CD4-positive, alpha-beta T cell (primary cell): ENCODE measurements at regions of chr14 and their contacts with region 1.

Region 1: GRCh38 chr14:106518054-106518943 is 991.9 kb downstream of the TMEM121 start:
- DNase-seq: peak; percentile 79 to 92 (median 87)
- ATAC-seq: peak; percentile 93
- H3K4me3 ChIP-seq: no peak overlapping the region
- H3K4me3 Mint-ChIP-seq: no peak overlapping the region
- H3K27ac ChIP-seq: no peak overlapping the region
- H3K27ac Mint-ChIP-seq: no peak overlapping the region
- H3K4me1 ChIP-seq: peaks cover 12% of the 10 kb centered on the region
- H3K4me1 Mint-ChIP-seq: peaks cover 34% of the 10 kb centered on the region
- H3K27me3 ChIP-seq: peaks cover 0 to 10% of the 10 kb centered on the region in 2 experiments
- H3K27me3 Mint-ChIP-seq: no peaks in the 10 kb centered on the region
- CTCF ChIP-seq: peak; percentile 77

Region 2: DNA sequence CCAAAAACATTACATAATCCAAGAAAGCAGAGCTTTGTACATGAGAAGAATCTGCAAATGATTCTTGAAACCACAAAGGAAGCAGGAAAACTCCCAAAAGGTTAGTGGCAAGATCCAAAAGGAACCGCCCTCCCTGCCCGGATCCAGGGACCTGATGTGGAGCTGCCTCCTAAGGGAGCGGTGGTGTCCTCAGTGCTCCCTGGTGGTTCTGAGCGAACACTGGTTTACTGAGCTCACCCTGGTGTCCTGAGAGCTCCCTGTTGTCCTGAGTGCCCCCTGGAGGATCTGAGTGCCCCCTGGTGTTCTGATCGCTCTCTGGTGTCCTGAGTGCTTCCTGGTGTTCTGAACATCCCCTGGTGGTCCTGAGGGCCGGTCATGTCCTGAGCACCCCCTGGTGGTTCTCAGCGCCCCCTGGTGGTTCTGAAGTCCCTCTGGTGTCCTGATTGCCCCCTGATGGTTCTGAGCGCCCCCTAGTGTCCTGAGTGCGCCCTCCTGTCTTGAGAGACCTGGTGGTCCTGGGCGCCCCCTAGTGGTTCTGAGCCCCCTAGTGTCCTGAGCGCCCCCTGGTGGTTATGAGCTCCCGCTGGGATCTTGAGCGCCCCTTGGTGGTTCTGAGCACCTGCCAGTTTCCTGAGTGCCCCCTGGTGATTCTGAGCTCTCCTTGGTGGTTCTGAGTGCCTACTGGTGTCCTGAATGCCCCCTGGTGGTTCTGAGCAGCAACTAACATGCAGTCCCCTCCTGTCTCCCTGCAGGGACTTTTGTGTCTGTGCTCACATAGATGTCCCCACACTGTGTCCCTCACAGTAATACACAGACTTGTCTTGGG is 100.9 kb before region 1 on chr14:
- CTCF ChIA-PET with region 1: interaction called, 12 read pairs
- POLR2A ChIA-PET with region 1: no interaction called
- intact Hi-C with region 1: no loop called
- DNase-seq: peak; percentile 38 to 90 (median 74)
- ATAC-seq: peak; percentile 61
- H3K4me3 ChIP-seq: no peak overlapping the region
- H3K4me3 Mint-ChIP-seq: no peak overlapping the region
- H3K27ac ChIP-seq: no peak overlapping the region
- H3K27ac Mint-ChIP-seq: peak overlapping the region; percentile 56
- H3K4me1 ChIP-seq: peaks cover 7% of the 10 kb centered on the region
- H3K4me1 Mint-ChIP-seq: peaks cover 15% of the 10 kb centered on the region
- H3K27me3 ChIP-seq: no peaks in the 10 kb centered on the region
- H3K27me3 Mint-ChIP-seq: peaks cover 10% of the 10 kb centered on the region
- CTCF ChIP-seq: peak; percentile 77

Region 3: GRCh38 chr14:106436310-106436905 is 81.9 kb before region 1 on chr14:
- CTCF ChIA-PET with region 1: interaction called, 4 read pairs
- POLR2A ChIA-PET with region 1: no interaction called
- intact Hi-C with region 1: loop called (anchors 1 to 2 kb)
- DNase-seq: peak; percentile 48 to 77 (median 67)
- ATAC-seq: no peak
- H3K4me3 ChIP-seq: no peak overlapping the region
- H3K4me3 Mint-ChIP-seq: no peak overlapping the region
- H3K27ac ChIP-seq: no peak overlapping the region
- H3K27ac Mint-ChIP-seq: no peak overlapping the region
- H3K4me1 ChIP-seq: no peaks in the 10 kb centered on the region
- H3K4me1 Mint-ChIP-seq: peaks cover 5% of the 10 kb centered on the region
- H3K27me3 ChIP-seq: no peaks in the 10 kb centered on the region
- H3K27me3 Mint-ChIP-seq: peaks cover 24% of the 10 kb centered on the region
- CTCF ChIP-seq: peak; percentile 74

Region 4: GRCh38 chr14:106442857-106443256 is 75.4 kb before region 1 on chr14:
- CTCF ChIA-PET with region 1: no interaction called
- POLR2A ChIA-PET with region 1: no interaction called
- intact Hi-C with region 1: loop called in 1 of 2 experiments (anchors 1 kb)
- DNase-seq: peak; percentile 15 to 60 (median 40)
- ATAC-seq: peak; percentile 93
- H3K4me3 ChIP-seq: no peak overlapping the region
- H3K4me3 Mint-ChIP-seq: no peak overlapping the region
- H3K27ac ChIP-seq: no peak overlapping the region
- H3K27ac Mint-ChIP-seq: no peak overlapping the region
- H3K4me1 ChIP-seq: peaks cover 5% of the 10 kb centered on the region
- H3K4me1 Mint-ChIP-seq: peaks cover 5% of the 10 kb centered on the region
- H3K27me3 ChIP-seq: peaks cover 0 to 2% of the 10 kb centered on the region in 2 experiments
- H3K27me3 Mint-ChIP-seq: peaks cover 36% of the 10 kb centered on the region
- CTCF ChIP-seq: peak; percentile 62

Region 5: GRCh38 chr14:106459971-106460730 is 58.1 kb before region 1 on chr14:
- CTCF ChIA-PET with region 1: interaction called, 3 read pairs
- POLR2A ChIA-PET with region 1: interaction called, 3 read pairs
- intact Hi-C with region 1: loop called (anchors 1 kb)
- DNase-seq: peak; percentile 52 to 85 (median 61)
- ATAC-seq: peak; percentile 74
- H3K4me3 ChIP-seq: no peak overlapping the region
- H3K4me3 Mint-ChIP-seq: no peak overlapping the region
- H3K27ac ChIP-seq: no peak overlapping the region
- H3K27ac Mint-ChIP-seq: no peak overlapping the region
- H3K4me1 ChIP-seq: peaks cover 7% of the 10 kb centered on the region
- H3K4me1 Mint-ChIP-seq: peaks cover 5% of the 10 kb centered on the region
- H3K27me3 ChIP-seq: no peaks in the 10 kb centered on the region
- H3K27me3 Mint-ChIP-seq: peaks cover 4% of the 10 kb centered on the region
- CTCF ChIP-seq: peak; percentile 87

Region 6: DNA sequence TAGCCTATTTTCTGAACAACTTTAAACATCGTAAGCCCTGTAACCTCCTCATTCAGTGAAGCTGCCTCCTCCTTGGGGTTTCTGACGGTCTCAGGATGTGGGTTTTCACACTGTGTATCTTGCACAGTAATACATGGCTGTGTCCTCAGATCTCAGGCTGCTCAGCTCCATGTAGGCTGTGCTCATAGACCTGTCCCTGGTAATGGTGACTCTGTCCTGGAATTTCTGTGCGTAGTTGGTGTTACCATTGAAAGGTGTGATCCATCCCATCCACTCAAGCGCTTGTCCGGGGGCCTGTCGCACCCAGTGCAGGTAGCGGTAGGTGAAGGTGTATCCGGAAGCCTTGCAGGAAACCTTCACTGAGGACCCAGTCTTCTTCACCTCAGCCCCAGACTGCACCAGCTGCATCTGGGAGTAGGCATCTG is 11.4 kb before region 1 on chr14:
- CTCF ChIA-PET with region 1: interaction called, 18 read pairs
- POLR2A ChIA-PET with region 1: interaction called, 3 read pairs
- intact Hi-C with region 1: loop called in 1 of 2 experiments (anchors 1 kb)
- DNase-seq: peak; percentile 28 to 86 (median 45)
- ATAC-seq: peak; percentile 65
- H3K4me3 ChIP-seq: peak overlapping the region; percentile 36
- H3K4me3 Mint-ChIP-seq: peak overlapping the region; percentile 85
- H3K27ac ChIP-seq: peak overlapping the region; percentile 64 to 82
- H3K27ac Mint-ChIP-seq: peak overlapping the region; percentile 98
- H3K4me1 ChIP-seq: peaks cover 69% of the 10 kb centered on the region
- H3K4me1 Mint-ChIP-seq: peaks cover 71% of the 10 kb centered on the region
- H3K27me3 ChIP-seq: no peaks in the 10 kb centered on the region
- H3K27me3 Mint-ChIP-seq: no peaks in the 10 kb centered on the region
- CTCF ChIP-seq: no peak

Region 7: DNA sequence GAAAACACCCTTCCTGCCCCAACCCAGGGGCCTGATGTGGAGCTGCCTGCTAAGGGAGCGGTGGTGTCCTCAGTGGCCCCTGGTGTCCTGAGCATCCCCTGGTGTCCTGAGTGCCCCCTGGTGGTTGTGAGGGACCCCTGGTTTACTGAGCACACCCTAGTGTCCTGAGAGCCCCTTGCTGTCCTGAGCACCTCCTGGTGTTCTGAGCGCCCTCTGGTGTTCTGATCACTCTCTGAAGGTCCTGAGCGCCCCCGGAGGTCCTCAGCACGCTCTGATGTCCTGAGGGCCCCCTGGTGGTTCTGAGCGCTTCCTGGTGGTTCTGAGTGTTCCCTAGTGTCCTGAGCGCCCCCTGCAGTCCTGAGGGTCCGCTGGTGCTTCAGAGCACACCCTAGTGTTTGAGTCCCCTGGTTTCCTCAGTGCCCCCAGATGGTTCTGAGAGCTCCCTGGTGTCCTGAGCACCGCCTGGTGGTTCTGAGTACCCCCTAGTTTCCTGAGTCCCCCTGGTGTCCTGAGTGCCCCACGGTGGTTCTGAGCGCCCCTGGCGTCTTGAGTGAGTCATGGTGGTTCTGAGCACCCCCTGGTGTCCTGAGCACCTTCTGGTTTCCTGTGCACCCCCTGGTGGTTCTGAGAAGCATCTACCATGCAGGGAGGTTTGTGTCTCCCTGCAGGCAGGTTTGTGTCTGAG is 12.3 kb after region 1 on chr14:
- CTCF ChIA-PET with region 1: interaction called, 15 read pairs
- POLR2A ChIA-PET with region 1: interaction called, 3 read pairs
- intact Hi-C with region 1: no loop called
- DNase-seq: peak in 10 of 14 experiments; percentile 7 to 77 (median 36)
- ATAC-seq: peak; percentile 93
- H3K4me3 ChIP-seq: no peak overlapping the region
- H3K4me3 Mint-ChIP-seq: no peak overlapping the region
- H3K27ac ChIP-seq: no peak overlapping the region
- H3K27ac Mint-ChIP-seq: no peak overlapping the region
- H3K4me1 ChIP-seq: peaks cover 2% of the 10 kb centered on the region
- H3K4me1 Mint-ChIP-seq: no peaks in the 10 kb centered on the region
- H3K27me3 ChIP-seq: peaks cover 0 to 13% of the 10 kb centered on the region in 2 experiments
- H3K27me3 Mint-ChIP-seq: peaks cover 37% of the 10 kb centered on the region
- CTCF ChIP-seq: peak; percentile 21